Psoas muscle (tissue), 8 donors: ENCODE measurements at regions of chr14 and their contacts with region 1.

Region 1: DNA sequence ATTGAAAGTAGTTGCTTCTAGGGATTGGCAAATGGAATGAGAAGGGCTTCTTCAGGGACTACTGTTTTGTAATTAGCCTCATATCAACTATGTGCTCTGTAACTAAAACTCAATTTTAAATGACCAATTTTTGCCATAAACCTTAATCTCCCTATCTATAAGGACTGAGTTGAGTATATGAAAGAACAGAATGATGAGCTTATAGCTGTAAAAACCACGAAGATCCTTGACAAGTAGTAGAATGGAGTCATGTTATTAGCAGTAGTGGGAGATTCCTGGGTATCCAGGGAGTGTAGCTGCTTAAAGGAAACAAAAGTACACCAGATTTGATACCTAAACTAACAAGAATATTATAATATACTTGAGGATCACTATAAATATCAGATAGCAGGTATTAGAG is 28.0 kb downstream of the LGALS3 start:
- DNase-seq: no peak
- ATAC-seq: no peak
- H3K4me3 ChIP-seq: no peak overlapping the region
- H3K27ac ChIP-seq: no peak overlapping the region
- H3K4me1 ChIP-seq: no peaks in the 10 kb centered on the region
- H3K27me3 ChIP-seq: no peaks in the 10 kb centered on the region
- CTCF ChIP-seq: no peak

Region 2: DNA sequence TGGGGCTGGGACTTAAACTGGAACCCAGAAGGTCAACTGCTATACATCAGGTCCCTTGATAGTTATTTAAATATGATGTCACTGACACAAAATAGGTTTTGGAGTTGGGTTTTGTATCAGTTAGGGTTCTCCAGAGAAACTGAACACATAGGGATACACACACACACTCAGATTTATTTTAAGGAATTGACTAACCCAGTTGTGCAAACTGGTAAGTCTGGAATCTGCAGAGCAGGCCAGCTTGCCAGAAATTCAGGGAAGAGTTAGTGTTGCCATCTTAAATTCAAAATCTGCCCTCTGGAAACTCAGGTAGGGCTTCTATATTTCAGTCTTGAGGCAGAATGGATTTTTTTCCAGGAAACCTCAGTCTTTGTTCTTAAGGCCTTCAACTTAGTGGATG is 68.7 kb before region 1 on chr14:
- intact Hi-C with region 1: loop called in 1 of 2 experiments (anchors 2 kb)
- DNase-seq: no peak
- ATAC-seq: peak; percentile 34 to 76 (median 54)
- H3K4me3 ChIP-seq: no peak overlapping the region
- H3K27ac ChIP-seq: no peak overlapping the region
- H3K4me1 ChIP-seq: no peaks in the 10 kb centered on the region
- H3K27me3 ChIP-seq: no peaks in the 10 kb centered on the region
- CTCF ChIP-seq: no peak

Region 3: GRCh38 chr14:55180434-55180833 is 23.4 kb after region 1 on chr14:
- intact Hi-C with region 1: no loop called
- DNase-seq: no peak
- ATAC-seq: no peak
- H3K4me3 ChIP-seq: no peak overlapping the region
- H3K27ac ChIP-seq: no peak overlapping the region
- H3K4me1 ChIP-seq: no peaks in the 10 kb centered on the region
- H3K27me3 ChIP-seq: no peaks in the 10 kb centered on the region
- CTCF ChIP-seq: no peak